ENCODE measurements at regions of chr5 and their contacts with region 1.

Region 1: DNA sequence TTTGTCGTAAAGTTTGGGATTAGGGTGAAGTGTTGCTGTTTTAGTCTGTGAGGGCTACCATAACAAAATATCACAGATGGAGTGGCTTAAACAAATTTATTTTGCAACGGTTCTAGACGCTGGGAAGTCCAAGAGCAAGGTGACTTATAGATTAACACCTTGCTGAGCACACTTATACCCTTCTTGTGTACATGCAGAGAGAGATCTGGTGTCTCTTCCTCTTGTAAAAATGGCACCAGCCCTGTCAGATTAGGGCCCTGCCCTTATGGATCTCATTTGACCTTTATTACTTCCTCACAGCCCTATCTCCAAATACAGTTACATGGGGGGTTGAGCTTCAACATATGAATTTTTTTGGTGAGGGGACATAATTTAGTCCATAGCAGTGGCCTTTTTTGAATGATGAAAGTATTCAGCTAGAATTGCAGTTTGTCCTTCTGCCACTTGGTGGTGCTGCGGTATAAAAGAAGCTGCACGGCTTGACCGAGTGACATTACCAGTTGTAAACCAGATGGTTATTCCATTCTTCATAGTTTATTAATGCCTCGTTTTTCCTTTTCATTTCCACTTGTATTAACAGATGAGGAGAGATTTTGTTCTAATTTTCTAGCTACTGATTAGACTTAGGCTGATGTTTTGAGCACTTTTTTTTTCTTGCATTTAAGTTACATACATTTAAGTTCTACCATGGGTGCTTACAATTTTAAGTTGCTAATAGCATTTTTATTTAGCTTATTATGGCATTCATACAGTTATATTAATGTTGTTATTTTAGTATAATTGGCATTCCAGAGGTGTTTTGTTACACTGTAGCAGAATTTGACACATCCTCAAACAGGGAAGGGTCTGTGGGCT is 19.4 kb downstream of the DCP2 start:
- DNase-seq: peak in 4 of 5 donors; percentile 59 to 84 (median 72)
- H3K4me3 ChIP-seq: no peak overlapping the region
- H3K27ac ChIP-seq: no peak overlapping the region
- H3K4me1 ChIP-seq: no peaks in the 10 kb centered on the region
- H3K27me3 ChIP-seq: no peaks in the 10 kb centered on the region
- CTCF ChIP-seq: peak; percentile 87

Region 2: DNA sequence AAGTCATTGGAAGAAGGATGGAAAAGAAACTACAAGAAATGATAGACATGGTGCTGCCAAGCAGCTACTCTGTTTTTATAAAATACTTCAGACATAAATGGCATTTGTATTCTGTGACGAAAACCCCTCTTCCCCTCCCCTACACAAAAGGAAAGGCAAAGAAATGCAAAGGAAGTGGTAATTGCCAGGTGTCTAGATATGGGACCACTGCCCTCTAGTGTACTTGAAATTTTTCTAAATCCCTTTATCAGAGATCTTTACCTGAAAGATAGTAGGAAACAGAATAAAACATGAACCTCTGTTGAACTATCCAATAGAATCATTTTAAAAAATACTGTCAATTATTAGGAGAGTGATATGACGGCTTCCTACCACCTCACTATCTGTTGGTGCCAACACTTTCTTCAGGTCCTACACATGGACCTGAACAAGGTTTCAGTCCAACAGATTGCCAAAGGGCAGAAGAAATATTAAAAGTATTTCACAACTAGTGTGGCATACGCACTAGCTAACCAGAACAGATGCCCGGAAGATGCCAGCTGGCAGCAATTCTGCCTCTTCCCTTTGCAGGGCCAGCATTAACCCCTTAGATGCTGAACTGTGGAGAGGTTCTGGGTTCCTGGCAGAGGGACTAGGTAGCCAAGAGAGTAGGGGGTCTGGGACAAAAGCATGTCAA is 334.7 kb after region 1 on chr5:
- intact Hi-C with region 1: loop called (anchors 10 kb)
- DNase-seq: peak in 2 of 5 donors; percentile 71 to 77
- H3K4me3 ChIP-seq: peak overlapping the region in 2 of 3 donors; percentile 16 to 37
- H3K27ac ChIP-seq: no peak overlapping the region
- H3K4me1 ChIP-seq: peaks cover 0 to 3% (median 0%) of the 10 kb centered on the region in 3 donors
- H3K27me3 ChIP-seq: no peaks in the 10 kb centered on the region
- CTCF ChIP-seq: peak; percentile 49